ENCODE measurements at regions of chr10 and their contacts with region 1.

Region 1: GRCh38 chr10:43689955-43690771 is 41.5 kb upstream of the ZNF32 start:
- DNase-seq: peak; percentile 63 to 88 (median 78)
- H3K4me3 ChIP-seq: peak overlapping the region; percentile 34 to 88 (median 68)
- H3K27ac ChIP-seq: peak overlapping the region in 37 of 59 donors; percentile 5 to 82 (median 67)
- H3K27me3 ChIP-seq: peaks cover 0 to 9% (median 0%) of the 10 kb centered on the region in 45 donors
- CTCF ChIP-seq: peak; percentile 41 to 98 (median 82)

Region 2: GRCh38 chr10:43931308-43931930 is 241.3 kb after region 1 on chr10:
- intact Hi-C with region 1: no loop called
- DNase-seq: no peak
- H3K4me3 ChIP-seq: no peak overlapping the region
- H3K27ac ChIP-seq: no peak overlapping the region
- H3K27me3 ChIP-seq: peaks cover 0 to 17% (median 0%) of the 10 kb centered on the region in 45 donors
- CTCF ChIP-seq: no peak

Region 3: DNA sequence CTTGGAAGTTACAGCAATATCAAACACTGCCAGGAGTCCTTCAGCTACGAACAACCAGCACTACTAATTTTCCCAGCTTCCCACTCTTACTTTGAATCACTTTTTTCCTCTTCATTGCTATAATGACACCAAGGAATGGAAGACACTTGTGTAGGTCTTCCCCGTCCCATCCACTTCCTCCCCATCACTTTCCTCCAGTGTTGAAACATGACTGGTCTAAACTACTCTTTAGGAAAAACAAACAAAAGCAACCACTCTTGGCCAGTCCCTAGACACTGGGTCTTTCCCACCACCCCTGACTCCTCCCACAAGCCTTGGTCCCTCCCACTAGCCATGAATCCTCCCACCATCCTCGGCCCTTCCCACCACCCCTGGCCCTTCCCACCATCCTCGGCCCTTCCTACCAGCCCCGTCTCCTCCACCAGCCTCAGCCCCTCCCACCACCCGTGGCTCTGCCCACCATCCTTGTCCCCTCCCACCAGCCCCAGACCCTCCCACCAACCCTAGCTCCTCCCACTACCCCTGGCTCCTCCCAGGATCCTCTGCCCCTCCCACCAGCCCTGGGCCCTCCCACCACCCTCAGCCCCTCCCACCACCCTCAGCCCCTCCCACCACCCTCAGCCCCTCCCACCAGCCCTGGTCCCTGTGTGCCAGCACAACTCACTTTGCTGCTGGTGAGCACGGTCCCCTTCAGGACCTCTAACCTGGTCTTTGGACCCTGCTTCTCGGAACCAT is 626.2 kb after region 1 on chr10:
- intact Hi-C with region 1: loop called (anchors 1 to 5 kb)
- DNase-seq: no peak
- H3K4me3 ChIP-seq: no peak overlapping the region
- H3K27ac ChIP-seq: no peak overlapping the region
- H3K27me3 ChIP-seq: no peaks in the 10 kb centered on the region
- CTCF ChIP-seq: no peak

Measured in dorsolateral prefrontal cortex (tissue), 120 donors.